Dendritic cell treated with granulocyte-macrophage colony-stimulating factor and Interleukin-4, amounts not matched to agents 40 ng/mL and 50 ng/mL, for 4 days (primary cell): ENCODE measurements at regions of chr2 and their contacts with region 1.

Region 1: GRCh38 chr2:30711646-30712085 is 95.6 kb downstream of the CAPN13 start:
- H3K4me3 Mint-ChIP-seq: no peak overlapping the region
- H3K27ac Mint-ChIP-seq: no peak overlapping the region
- H3K4me1 Mint-ChIP-seq: peaks cover 17% of the 10 kb centered on the region
- H3K27me3 Mint-ChIP-seq: peaks cover 1% of the 10 kb centered on the region

Region 2: GRCh38 chr2:30208452-30208851 is 503.2 kb before region 1 on chr2:
- intact Hi-C with region 1: loop called (anchors 1 kb)
- H3K4me3 Mint-ChIP-seq: no peak overlapping the region
- H3K27ac Mint-ChIP-seq: no peak overlapping the region
- H3K4me1 Mint-ChIP-seq: no peaks in the 10 kb centered on the region
- H3K27me3 Mint-ChIP-seq: peaks cover 27% of the 10 kb centered on the region

Region 3: DNA sequence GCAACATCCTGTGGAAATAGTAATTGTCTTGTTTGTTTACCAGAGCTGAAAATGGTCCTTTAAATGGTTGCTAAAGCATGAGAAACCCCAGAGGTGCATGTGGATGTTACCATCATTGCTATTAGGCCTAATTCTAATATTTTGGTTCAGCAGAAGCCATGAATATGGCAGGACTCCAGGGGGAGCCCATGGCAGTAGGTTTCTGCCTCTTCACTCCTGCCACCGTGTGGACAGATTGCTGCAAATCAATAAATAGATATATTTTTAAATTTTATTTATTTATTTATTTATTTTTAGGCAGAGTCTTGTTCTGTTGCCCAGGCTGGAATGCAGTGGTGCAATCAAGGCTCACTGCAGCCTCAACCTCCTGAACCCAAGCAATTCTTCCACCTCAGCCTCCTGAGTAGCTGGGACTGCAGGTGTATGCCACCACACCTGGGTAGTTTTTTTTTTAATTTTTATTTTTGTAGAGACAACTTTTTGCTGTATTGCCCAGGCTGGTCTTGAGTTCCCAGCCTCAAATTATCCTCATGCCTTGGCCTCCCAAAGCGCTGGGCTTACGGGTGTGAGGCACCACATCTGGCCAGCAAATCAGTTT is 150.5 kb after region 1 on chr2:
- intact Hi-C with region 1: loop called (anchors 1 kb)
- H3K4me3 Mint-ChIP-seq: no peak overlapping the region
- H3K27ac Mint-ChIP-seq: no peak overlapping the region
- H3K4me1 Mint-ChIP-seq: peaks cover 18% of the 10 kb centered on the region
- H3K27me3 Mint-ChIP-seq: peaks cover 7% of the 10 kb centered on the region

Region 4: DNA sequence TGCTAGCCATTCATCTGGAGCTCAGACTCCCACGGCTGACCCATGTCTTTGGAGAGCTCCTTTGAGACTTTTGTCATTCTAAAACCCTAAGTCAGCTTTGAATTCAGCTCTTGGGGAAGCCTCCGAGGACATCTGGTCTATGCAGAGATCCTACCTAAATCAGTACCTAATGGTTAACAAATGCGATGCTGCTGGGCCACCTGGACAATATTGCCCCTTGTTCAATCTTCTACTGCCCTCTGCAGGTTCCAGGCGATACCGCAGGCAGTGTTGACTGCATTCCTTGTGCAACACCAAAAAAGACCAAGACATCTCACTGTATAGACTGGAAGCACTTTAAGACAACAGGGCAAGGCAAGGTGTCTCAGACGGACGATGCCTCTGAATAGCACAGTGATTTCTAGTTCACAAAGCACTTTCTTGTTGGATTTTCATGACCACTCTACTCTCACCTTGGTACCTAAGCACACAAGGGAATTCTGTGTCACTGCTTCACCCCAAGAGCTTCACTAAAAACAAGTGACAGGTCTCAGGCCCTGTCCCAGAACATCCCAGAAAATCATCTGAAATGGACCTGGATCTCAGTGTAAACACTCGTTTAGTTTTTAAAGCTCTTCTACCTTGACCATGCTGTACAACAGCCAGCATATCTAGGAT is 622.0 kb after region 1 on chr2:
- intact Hi-C with region 1: loop called (anchors 1 kb)
- H3K4me3 Mint-ChIP-seq: no peak overlapping the region
- H3K27ac Mint-ChIP-seq: no peak overlapping the region
- H3K4me1 Mint-ChIP-seq: peaks cover under 1% of the 10 kb centered on the region
- H3K27me3 Mint-ChIP-seq: no peaks in the 10 kb centered on the region